ENCODE measurements at regions of chr12 and their contacts with region 1.

Region 1: GRCh38 chr12:43882578-43883178 is 46.8 kb downstream of the TMEM117 start:
- DNase-seq: no peak
- ATAC-seq: peak; percentile 45 to 74
- H3K4me3 ChIP-seq: no peak overlapping the region
- H3K27ac ChIP-seq: no peak overlapping the region
- H3K4me1 ChIP-seq: peaks cover 23 to 24% of the 10 kb centered on the region in 2 donors
- H3K27me3 ChIP-seq: no peaks in the 10 kb centered on the region
- CTCF ChIP-seq: peak; percentile 36 to 82 (median 75)
- POLR2A ChIP-seq: no peak

Region 2: DNA sequence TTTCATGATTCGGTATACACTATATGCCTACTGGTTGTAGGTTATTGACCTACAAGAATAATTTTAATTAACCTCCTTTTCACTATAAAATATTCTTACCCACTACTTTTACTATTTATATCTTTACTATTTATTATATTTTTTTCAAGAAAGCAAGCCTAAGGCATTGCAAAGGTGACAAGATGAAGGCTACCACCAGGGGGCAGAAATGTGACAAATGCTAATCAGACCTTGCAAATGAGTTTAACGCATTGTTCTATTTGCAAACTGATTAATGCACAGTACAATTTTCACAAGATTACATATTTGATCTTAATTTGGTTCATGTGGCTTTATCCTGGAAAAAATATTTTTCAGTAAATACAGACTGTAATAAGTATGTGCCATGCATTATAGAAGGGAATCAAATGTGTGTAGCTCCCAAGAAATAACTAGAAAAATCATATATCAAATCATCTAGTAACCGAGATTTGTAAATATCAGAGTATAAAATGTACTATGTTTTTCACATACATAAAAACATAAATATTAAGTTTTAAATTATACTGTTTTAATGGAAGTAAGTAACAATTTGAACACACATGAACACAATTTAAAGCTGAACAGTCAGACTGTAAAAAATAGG is 437.6 kb before region 1 on chr12:
- in situ Hi-C with region 1: loop called in 1 of 4 experiments (anchors 25 kb)
- intact Hi-C with region 1: loop called (anchors 10 kb)
- DNase-seq: no peak
- ATAC-seq: no peak
- H3K4me3 ChIP-seq: no peak overlapping the region
- H3K27ac ChIP-seq: no peak overlapping the region
- H3K4me1 ChIP-seq: no peaks in the 10 kb centered on the region
- H3K27me3 ChIP-seq: no peaks in the 10 kb centered on the region
- CTCF ChIP-seq: peak in 3 of 5 experiments; percentile 30 to 60 (median 37)
- POLR2A ChIP-seq: no peak

Region 3: GRCh38 chr12:43453761-43454160 is 428.9 kb before region 1 on chr12:
- in situ Hi-C with region 1: loop called in 1 of 4 experiments (anchors 25 kb)
- intact Hi-C with region 1: loop called (anchors 10 kb)
- DNase-seq: no peak
- ATAC-seq: no peak
- H3K4me3 ChIP-seq: no peak overlapping the region
- H3K27ac ChIP-seq: no peak overlapping the region
- H3K4me1 ChIP-seq: no peaks in the 10 kb centered on the region
- H3K27me3 ChIP-seq: no peaks in the 10 kb centered on the region
- CTCF ChIP-seq: no peak
- POLR2A ChIP-seq: no peak

Region 4: GRCh38 chr12:43740511-43741100 is 142.1 kb before region 1 on chr12:
- in situ Hi-C with region 1: loop called in 1 of 4 experiments (anchors 10 kb)
- intact Hi-C with region 1: no loop called
- DNase-seq: no peak
- ATAC-seq: no peak
- H3K4me3 ChIP-seq: no peak overlapping the region
- H3K27ac ChIP-seq: no peak overlapping the region
- H3K4me1 ChIP-seq: peaks cover 8 to 11% of the 10 kb centered on the region in 2 donors
- H3K27me3 ChIP-seq: no peaks in the 10 kb centered on the region
- CTCF ChIP-seq: no peak
- POLR2A ChIP-seq: no peak

Region 5: DNA sequence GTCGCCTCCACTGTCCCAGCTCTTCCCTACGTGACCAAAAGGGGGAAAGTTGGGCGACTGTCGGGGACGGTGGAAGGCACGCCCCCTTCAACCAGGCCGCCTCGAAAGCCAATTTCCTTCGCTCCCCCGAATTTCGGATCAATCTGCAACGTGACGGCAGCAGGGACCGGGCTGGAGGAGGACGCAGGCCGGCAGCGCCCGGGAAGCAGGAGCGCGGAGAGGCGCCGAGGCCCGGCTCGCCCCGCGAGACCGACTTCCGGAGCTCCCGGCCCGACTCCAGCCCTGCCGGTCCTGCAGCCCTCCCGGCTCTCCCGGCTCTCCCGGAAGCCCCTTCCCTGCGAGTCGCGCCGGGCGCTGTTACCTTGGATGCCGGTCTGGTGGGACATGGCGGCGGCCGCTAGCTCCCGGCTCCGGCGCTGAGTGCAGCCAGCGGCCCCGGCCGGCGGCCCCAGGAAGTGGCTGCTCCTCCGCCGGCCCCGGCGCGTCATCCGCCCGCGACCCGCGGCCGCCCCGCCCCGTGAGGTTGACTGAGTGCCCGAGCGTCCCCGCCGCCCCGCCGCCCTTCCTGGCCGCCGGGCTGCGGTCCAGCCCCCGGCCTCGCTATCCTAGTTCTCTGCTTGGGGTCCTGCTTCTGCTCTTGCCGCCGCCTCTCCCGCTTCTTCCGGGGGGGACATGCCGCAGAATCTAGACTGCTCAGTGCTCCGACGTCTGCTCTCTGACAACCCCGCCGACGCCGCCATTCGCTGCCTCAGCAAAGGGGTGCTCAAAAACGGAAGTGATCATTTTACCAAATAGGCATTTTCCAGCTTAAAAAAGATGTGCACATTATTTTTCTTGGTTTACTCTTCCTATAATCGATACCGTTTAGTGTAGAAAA is 76.6 kb before region 1 on chr12 and contains the start of gene TWF1:
- in situ Hi-C with region 1: loop called in 1 of 4 experiments (anchors 10 kb)
- intact Hi-C with region 1: loop called (anchors 1 kb)
- DNase-seq: peak; percentile 58 to 77
- ATAC-seq: peak; percentile 98
- H3K4me3 ChIP-seq: peak within 1 kb of the TSS; percentile 80 to 92 (median 86)
- H3K27ac ChIP-seq: peak within 1 kb of the TSS; percentile 87 to 96 (median 94)
- H3K4me1 ChIP-seq: peaks cover 21 to 27% of the 10 kb centered on the region in 2 donors
- H3K27me3 ChIP-seq: no peaks in the 10 kb centered on the region
- CTCF ChIP-seq: peak in 4 of 5 experiments; percentile 31 to 56 (median 43)
- POLR2A ChIP-seq: peak; percentile 62 to 76
- total RNA-seq, gene TWF1: 7.4 to 10.7 (median 9.0) TPM